Left lung (tissue), 14 donors: ENCODE measurements at regions of chr5 and their contacts with region 1.

Region 1: GRCh38 chr5:151825445-151825844 is 53.7 kb downstream of the G3BP1 start:
- DNase-seq: peak in 3 of 4 donors; percentile 41 to 80 (median 59)
- ATAC-seq: peak; percentile 96
- H3K4me3 ChIP-seq: no peak overlapping the region
- H3K27ac ChIP-seq: no peak overlapping the region
- H3K4me1 ChIP-seq: no peaks in the 10 kb centered on the region
- H3K27me3 ChIP-seq: no peaks in the 10 kb centered on the region
- CTCF ChIP-seq: peak; percentile 61 to 70

Region 2: DNA sequence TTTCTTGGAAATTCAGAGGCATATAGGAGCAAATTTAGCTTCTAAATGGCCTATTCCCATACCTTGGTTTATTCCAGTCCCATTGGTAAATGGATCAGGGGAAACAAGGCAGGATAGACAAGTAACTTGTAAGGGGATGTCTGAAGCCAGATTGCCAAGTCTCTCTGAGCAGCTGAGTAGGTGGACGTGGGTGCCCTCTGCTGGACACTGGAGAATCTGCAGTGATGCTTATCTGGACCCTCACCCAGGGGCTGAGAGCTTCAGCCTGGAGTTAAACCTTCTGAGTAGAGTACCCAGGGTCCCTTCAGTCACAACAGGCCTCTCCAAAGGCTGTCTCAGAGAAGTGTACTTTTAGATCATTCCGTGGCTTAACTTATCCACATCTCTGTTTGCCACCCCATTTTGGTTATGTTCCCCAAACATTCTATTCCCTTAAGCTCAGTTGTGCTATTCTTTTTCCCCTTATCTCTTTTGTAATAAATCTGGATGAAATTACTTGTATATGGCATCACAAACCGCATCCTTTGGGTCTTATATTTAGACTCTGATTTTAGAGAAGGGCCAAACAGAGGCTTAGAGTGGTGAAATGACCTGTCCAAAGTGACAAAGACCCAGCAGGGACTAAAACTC is 317.5 kb after region 1 on chr5:
- intact Hi-C with region 1: loop called in 1 of 2 experiments (anchors 5 kb)
- DNase-seq: peak in 3 of 4 donors; percentile 46 to 75 (median 54)
- ATAC-seq: peak; percentile 89
- H3K4me3 ChIP-seq: no peak overlapping the region
- H3K27ac ChIP-seq: no peak overlapping the region
- H3K4me1 ChIP-seq: no peaks in the 10 kb centered on the region
- H3K27me3 ChIP-seq: no peaks in the 10 kb centered on the region
- CTCF ChIP-seq: peak; percentile 80 to 84

Region 3: DNA sequence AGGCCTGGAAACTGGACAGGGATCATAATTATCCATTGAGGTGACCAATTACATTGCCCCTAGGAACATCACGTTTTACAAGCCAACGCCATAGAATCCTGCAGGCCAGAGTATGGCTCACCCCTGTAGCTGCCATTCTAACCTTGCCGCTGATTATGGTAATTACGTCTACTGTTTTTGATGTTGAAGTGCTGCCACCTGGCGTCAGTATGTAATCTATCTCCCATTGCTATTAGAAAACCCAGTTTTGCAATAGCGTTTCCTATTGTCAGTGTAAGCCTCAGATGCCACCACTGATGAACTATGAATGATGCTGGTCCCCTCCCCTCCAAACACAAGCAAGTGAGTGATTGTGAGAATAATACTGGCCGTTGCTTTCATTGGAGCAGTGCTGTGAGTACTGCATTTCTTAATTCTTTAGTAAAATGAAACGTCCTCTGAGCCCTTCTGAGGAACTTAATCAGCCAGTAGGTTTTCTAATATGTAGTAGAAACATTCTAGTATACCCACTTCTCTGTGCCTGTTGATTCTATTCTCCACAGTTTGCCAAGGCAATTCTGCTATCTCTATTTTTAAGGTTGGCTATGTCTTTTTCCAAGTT is 680.1 kb after region 1 on chr5:
- intact Hi-C with region 1: loop called in 1 of 2 experiments (anchors 10 kb)
- DNase-seq: peak in 2 of 4 donors; percentile 59 to 75
- ATAC-seq: peak; percentile 89
- H3K4me3 ChIP-seq: no peak overlapping the region
- H3K27ac ChIP-seq: no peak overlapping the region
- H3K4me1 ChIP-seq: no peaks in the 10 kb centered on the region
- H3K27me3 ChIP-seq: peaks cover 0 to 9% of the 10 kb centered on the region in 2 donors
- CTCF ChIP-seq: peak; percentile 50 to 65